Activated CD8-positive, alpha-beta T cell treated with anti-CD3 and anti-CD28 coated beads, Interleukin-2, amount 10 ng/mL, durations not matched to agents 7 days and 5 days (primary cell): ENCODE measurements at regions of chr4 and their contacts with region 1.

Region 1: GRCh38 chr4:16001484-16001858 is 38.5 kb upstream of the FGFBP2 start:
- DNase-seq: peak; percentile 71
- ATAC-seq: peak; percentile 91
- H3K4me3 Mint-ChIP-seq: no peak overlapping the region
- H3K27ac Mint-ChIP-seq: no peak overlapping the region
- H3K4me1 Mint-ChIP-seq: no peaks in the 10 kb centered on the region
- H3K27me3 Mint-ChIP-seq: peaks cover 13% of the 10 kb centered on the region

Region 2: DNA sequence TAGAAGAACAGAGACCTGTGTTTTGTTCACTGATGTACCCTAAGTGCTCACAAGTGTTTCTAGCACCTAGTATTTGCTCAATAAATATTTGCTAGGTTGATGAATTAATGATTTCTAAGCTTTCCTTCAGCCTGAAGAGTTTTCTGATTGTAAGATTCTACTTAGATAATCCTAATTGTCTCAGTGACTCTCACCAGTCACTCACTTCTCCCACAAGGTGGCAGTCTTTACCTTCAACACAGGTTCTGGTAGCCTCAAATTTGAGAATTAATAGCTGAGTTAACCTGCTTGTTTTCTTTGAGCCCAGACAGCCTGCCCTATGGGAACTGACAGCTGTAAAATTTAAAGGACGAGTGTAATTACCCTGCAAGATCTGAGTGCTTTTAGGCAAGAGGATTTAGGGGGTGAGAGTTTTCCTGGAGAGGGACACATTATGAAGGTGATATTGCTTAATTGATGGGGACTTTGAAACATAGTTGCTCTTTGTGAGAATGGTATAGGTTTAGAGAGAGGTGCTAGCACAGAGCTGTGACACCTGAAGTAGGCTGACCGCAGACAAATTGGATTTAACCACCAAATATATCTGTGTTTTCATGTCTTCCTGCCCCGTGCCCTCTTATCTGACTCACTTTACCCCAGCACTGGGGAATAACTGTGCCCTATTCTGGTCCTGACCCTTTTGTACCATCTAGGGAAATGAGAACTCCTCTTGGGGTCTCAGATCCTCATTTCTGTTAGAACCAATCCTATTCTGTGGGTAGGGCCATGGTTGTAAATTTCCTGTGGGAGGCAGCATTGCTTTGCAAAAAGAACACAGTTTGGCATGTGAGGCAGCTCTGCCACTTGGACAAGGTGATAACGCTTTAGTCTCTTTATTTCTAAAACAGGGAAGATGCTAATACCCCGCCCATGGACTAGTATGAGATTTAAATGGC is 195.6 kb before region 1 on chr4:
- CTCF ChIA-PET with region 1: interaction called, 15 read pairs
- POLR2A ChIA-PET with region 1: no interaction called
- DNase-seq: peak; percentile 63
- ATAC-seq: peak; percentile 64
- H3K4me3 Mint-ChIP-seq: no peak overlapping the region
- H3K27ac Mint-ChIP-seq: peak overlapping the region; percentile 21
- H3K4me1 Mint-ChIP-seq: peaks cover 65% of the 10 kb centered on the region
- H3K27me3 Mint-ChIP-seq: no peaks in the 10 kb centered on the region

Region 3: DNA sequence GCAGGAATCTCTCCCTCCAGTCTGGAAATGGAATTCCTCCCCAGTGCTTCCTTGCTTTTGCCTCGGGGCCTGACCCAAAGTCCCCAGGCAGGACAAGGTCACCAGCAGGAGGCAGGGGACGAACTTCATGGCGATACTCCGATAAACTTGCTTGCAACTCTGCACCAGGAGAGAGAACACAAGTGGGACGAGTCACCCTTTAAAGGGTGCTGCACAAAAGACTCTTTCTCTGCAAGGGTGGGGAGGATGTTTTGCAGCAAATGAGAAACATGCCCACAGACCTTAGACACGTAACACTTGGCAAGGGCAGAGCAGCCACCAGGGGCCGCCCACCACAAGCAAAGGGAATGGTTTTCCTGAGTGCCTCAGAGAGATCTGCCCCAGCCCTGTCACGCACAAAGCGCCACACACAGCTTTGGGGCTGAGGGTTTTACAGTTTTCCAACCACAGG is 38.4 kb before region 1 on chr4 and contains the start of gene FGFBP2:
- CTCF ChIA-PET with region 1: interaction called, 63 read pairs
- POLR2A ChIA-PET with region 1: no interaction called
- DNase-seq: peak; percentile 86
- ATAC-seq: peak; percentile 93
- H3K4me3 Mint-ChIP-seq: peak within 1 kb of the TSS; percentile 71
- H3K27ac Mint-ChIP-seq: peak within 1 kb of the TSS; percentile 76
- H3K4me1 Mint-ChIP-seq: peaks cover 34% of the 10 kb centered on the region
- H3K27me3 Mint-ChIP-seq: peaks cover 18% of the 10 kb centered on the region
- total RNA-seq, gene FGFBP2: 12.0 to 13.0 TPM

Region 4: GRCh38 chr4:15990570-15991285 is 10.7 kb before region 1 on chr4:
- CTCF ChIA-PET with region 1: interaction called, 13 read pairs
- POLR2A ChIA-PET with region 1: no interaction called
- DNase-seq: no peak
- ATAC-seq: no peak
- H3K4me3 Mint-ChIP-seq: no peak overlapping the region
- H3K27ac Mint-ChIP-seq: no peak overlapping the region
- H3K4me1 Mint-ChIP-seq: peaks cover 7% of the 10 kb centered on the region
- H3K27me3 Mint-ChIP-seq: peaks cover 44% of the 10 kb centered on the region